ENCODE measurements at regions of chr11 and their contacts with region 1.

Region 1: GRCh38 chr11:131246663-131247062 is 123.8 kb upstream of the NTM start:
- DNase-seq: no peak

Region 2: DNA sequence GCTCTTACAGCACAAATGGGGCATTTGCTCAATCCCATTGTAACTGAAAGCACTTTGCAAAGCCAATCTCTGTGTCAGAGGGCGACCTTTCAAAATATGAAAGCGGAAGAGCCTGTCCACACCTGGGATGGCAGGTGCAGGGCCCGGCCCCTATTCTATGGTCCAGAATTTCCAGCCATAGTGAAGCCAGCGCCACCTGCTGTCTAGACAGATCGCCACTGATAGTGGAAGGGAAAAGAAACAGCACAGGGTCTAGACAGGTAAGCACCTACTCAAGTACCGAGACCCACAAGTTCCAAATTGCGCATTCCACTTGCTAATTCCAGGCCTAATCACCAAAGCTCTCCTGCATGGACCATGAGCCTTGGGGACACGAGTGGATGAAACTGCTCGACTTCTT is 265.1 kb after region 1 on chr11:
- intact Hi-C with region 1: loop called (anchors 5 kb)
- DNase-seq: no peak

Region 3: GRCh38 chr11:132028380-132029240 is 781.9 kb after region 1 on chr11:
- intact Hi-C with region 1: no loop called
- DNase-seq: no peak

Measured in cardiac septum (tissue), 1 donor.